ENCODE measurements at regions of chr1 and their contacts with region 1.

Region 1: GRCh38 chr1:40449684-40450494 is at the start of gene ZFP69B:
- DNase-seq: peak; percentile 68 to 94 (median 89)
- ATAC-seq: peak; percentile 54
- H3K4me3 ChIP-seq: peak within 1 kb of the TSS; percentile 72 to 81
- H3K4me3 Mint-ChIP-seq: peak within 1 kb of the TSS; percentile 89
- H3K27ac ChIP-seq: peak within 1 kb of the TSS; percentile 54 to 67
- H3K27ac Mint-ChIP-seq: peak within 1 kb of the TSS; percentile 93
- H3K4me1 ChIP-seq: peaks cover 18% of the 10 kb centered on the region
- H3K4me1 Mint-ChIP-seq: peaks cover 25% of the 10 kb centered on the region
- H3K27me3 ChIP-seq: no peaks in the 10 kb centered on the region
- H3K27me3 Mint-ChIP-seq: no peaks in the 10 kb centered on the region
- CTCF ChIP-seq: no peak
- total RNA-seq, gene ZFP69B: 3.4 to 4.2 TPM

Region 2: GRCh38 chr1:40161125-40161887 is 288.6 kb before region 1 on chr1 and contains the start of gene RLF:
- CTCF ChIA-PET with region 1: no interaction called
- POLR2A ChIA-PET with region 1: no interaction called
- intact Hi-C with region 1: loop called in 1 of 2 experiments (anchors 2 kb)
- DNase-seq: peak; percentile 90 to 97 (median 94)
- ATAC-seq: peak; percentile 95
- H3K4me3 ChIP-seq: peak within 1 kb of the TSS; percentile 96 to 100
- H3K4me3 Mint-ChIP-seq: no peak within 1 kb of the TSS
- H3K27ac ChIP-seq: peak within 1 kb of the TSS; percentile 96 to 98
- H3K27ac Mint-ChIP-seq: no peak within 1 kb of the TSS
- H3K4me1 ChIP-seq: peaks cover 46% of the 10 kb centered on the region
- H3K4me1 Mint-ChIP-seq: peaks cover 22% of the 10 kb centered on the region
- H3K27me3 ChIP-seq: no peaks in the 10 kb centered on the region
- H3K27me3 Mint-ChIP-seq: no peaks in the 10 kb centered on the region
- CTCF ChIP-seq: no peak
- total RNA-seq, gene RLF: 62.2 to 62.6 TPM

Region 3: DNA sequence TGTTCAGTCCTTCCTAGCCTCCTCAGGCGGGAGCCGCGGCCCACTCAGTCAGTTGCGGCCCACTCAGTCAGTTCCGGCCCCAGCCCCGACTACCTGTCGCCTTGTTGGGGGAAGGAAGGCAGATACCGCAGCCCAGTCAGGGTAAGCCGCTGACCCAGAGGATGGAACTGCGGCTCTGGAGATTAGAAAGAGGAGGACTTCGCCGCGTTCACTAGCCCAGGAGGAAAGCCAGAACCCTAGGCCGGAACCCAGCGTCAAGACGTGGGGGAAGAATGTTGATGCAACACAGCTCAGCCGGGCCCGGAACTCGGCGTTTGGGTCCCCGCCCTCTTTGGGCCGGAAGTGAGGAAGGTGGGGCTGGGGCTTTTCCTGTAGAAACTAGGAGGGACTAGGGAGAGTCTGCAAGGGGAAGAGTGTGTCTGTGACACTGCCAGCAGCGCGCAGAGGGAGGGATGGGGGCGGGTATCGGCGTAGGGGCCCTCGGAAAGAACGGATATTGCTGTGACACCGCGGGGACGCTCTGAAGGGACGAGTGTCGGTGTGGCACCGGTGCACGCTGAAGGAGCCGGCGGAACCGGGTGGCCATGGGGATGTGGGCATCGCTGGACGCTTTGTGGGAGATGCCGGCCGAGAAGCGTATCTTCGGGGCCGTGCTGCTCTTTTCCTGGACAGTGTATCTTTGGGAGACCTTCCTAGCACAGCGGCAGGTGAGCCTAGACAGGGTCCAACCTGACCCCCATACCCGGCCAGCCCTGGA is 192.0 kb before region 1 on chr1 and contains the start of gene ZMPSTE24:
- CTCF ChIA-PET with region 1: no interaction called
- POLR2A ChIA-PET with region 1: no interaction called
- intact Hi-C with region 1: loop called in 1 of 2 experiments (anchors 1 kb)
- DNase-seq: peak; percentile 92 to 99 (median 95)
- ATAC-seq: peak; percentile 95
- H3K4me3 ChIP-seq: peak within 1 kb of the TSS; percentile 95 to 98
- H3K4me3 Mint-ChIP-seq: peak within 1 kb of the TSS; percentile 98
- H3K27ac ChIP-seq: peak within 1 kb of the TSS; percentile 88 to 99
- H3K27ac Mint-ChIP-seq: peak within 1 kb of the TSS; percentile 100
- H3K4me1 ChIP-seq: peaks cover 20% of the 10 kb centered on the region
- H3K4me1 Mint-ChIP-seq: peaks cover 56% of the 10 kb centered on the region
- H3K27me3 ChIP-seq: no peaks in the 10 kb centered on the region
- H3K27me3 Mint-ChIP-seq: no peaks in the 10 kb centered on the region
- CTCF ChIP-seq: no peak
- total RNA-seq, gene ZMPSTE24: 11.5 to 12.2 TPM

Region 4: GRCh38 chr1:40438391-40439015 is 11.4 kb before region 1 on chr1:
- CTCF ChIA-PET with region 1: interaction called, 10 read pairs
- POLR2A ChIA-PET with region 1: interaction called, 4 read pairs
- intact Hi-C with region 1: no loop called
- DNase-seq: peak in 4 of 9 experiments; percentile 17 to 63 (median 40)
- ATAC-seq: peak; percentile 40
- H3K4me3 ChIP-seq: no peak overlapping the region
- H3K4me3 Mint-ChIP-seq: no peak overlapping the region
- H3K27ac ChIP-seq: no peak overlapping the region
- H3K27ac Mint-ChIP-seq: no peak overlapping the region
- H3K4me1 ChIP-seq: no peaks in the 10 kb centered on the region
- H3K4me1 Mint-ChIP-seq: peaks cover 2% of the 10 kb centered on the region
- H3K27me3 ChIP-seq: no peaks in the 10 kb centered on the region
- H3K27me3 Mint-ChIP-seq: no peaks in the 10 kb centered on the region
- CTCF ChIP-seq: peak; percentile 70

Region 5: GRCh38 chr1:40476924-40477677 is 27.2 kb after region 1 on chr1 and contains the start of gene ZFP69:
- CTCF ChIA-PET with region 1: no interaction called
- POLR2A ChIA-PET with region 1: interaction called, 4 read pairs
- intact Hi-C with region 1: loop called (anchors 1 to 2 kb)
- DNase-seq: peak; percentile 29 to 88 (median 71)
- ATAC-seq: peak; percentile 95
- H3K4me3 ChIP-seq: peak within 1 kb of the TSS; percentile 79 to 82
- H3K4me3 Mint-ChIP-seq: peak within 1 kb of the TSS; percentile 91
- H3K27ac ChIP-seq: peak within 1 kb of the TSS; percentile 58 to 65
- H3K27ac Mint-ChIP-seq: peak within 1 kb of the TSS; percentile 87
- H3K4me1 ChIP-seq: peaks cover 10% of the 10 kb centered on the region
- H3K4me1 Mint-ChIP-seq: peaks cover 24% of the 10 kb centered on the region
- H3K27me3 ChIP-seq: no peaks in the 10 kb centered on the region
- H3K27me3 Mint-ChIP-seq: no peaks in the 10 kb centered on the region
- CTCF ChIP-seq: no peak
- total RNA-seq, gene ZFP69: 0.64 to 0.92 TPM

Region 6: GRCh38 chr1:40508375-40509341 is 58.8 kb after region 1 on chr1 and contains the start of gene EXO5:
- CTCF ChIA-PET with region 1: no interaction called
- POLR2A ChIA-PET with region 1: interaction called, 3 read pairs
- intact Hi-C with region 1: loop called (anchors 1 kb)
- DNase-seq: peak; percentile 60 to 89 (median 80)
- ATAC-seq: peak; percentile 98
- H3K4me3 ChIP-seq: peak within 1 kb of the TSS; percentile 79 to 95
- H3K4me3 Mint-ChIP-seq: peak within 1 kb of the TSS; percentile 90
- H3K27ac ChIP-seq: peak within 1 kb of the TSS; percentile 54 to 72
- H3K27ac Mint-ChIP-seq: peak within 1 kb of the TSS; percentile 77
- H3K4me1 ChIP-seq: peaks cover 9% of the 10 kb centered on the region
- H3K4me1 Mint-ChIP-seq: peaks cover 19% of the 10 kb centered on the region
- H3K27me3 ChIP-seq: no peaks in the 10 kb centered on the region
- H3K27me3 Mint-ChIP-seq: no peaks in the 10 kb centered on the region
- CTCF ChIP-seq: no peak
- total RNA-seq, gene EXO5: 6.7 to 7.6 TPM